Activated CD4-positive, alpha-beta T cell treated with anti-CD3 and anti-CD28 coated beads for 36 hours (primary cell): ENCODE measurements at regions of chr16 and their contacts with region 1.

Region 1: DNA sequence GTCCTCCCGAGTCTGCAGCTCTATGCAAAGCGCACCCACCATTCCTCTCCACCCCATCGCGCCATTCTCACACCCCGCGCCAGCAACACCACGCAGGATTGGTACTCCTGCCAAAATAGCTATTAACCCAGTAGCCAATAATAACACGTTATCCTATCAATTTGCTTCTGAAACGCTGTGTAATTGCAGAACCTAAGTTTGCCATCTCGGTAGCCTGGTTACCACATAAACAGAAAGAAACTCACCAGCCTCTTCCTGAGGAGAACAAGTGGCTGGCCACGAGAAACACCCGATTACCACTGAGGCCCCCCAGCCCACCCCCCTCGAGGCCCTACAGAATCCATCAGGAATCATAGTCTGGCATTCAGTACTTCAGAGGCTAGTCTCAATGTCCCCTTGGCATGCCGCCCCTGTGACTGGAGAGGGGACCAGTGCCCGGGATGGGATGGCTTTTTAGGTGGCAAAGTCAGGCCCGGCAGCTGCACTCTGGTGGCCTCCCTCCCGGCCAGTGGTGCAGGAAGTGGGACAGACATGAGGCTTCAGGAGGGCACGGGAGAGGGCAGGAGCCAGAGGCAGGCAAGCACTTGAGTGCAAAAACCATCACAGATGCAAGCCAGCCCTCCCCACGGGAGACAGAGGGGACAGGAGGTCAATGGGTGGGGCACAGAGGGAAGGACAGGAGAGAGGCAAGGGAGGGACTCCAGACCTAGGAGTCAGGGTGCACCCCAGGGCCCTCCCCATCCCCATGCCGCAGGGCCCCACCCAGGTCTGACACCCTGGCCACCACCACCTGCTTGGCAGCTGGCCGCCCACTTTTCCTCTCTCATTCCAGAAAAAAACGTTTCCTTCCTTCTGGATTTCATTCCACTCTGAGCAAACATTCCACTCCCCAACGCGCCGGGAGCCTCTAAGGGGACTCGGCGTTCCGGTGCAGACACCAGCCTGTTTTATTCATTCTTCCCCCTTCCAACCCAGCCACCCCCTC is 192.5 kb downstream of the ZNF423 start:
- DNase-seq: no peak
- ATAC-seq: no peak
- H3K4me3 Mint-ChIP-seq: no peak overlapping the region
- H3K27ac Mint-ChIP-seq: no peak overlapping the region
- H3K4me1 Mint-ChIP-seq: no peaks in the 10 kb centered on the region
- H3K27me3 Mint-ChIP-seq: no peaks in the 10 kb centered on the region

Region 2: DNA sequence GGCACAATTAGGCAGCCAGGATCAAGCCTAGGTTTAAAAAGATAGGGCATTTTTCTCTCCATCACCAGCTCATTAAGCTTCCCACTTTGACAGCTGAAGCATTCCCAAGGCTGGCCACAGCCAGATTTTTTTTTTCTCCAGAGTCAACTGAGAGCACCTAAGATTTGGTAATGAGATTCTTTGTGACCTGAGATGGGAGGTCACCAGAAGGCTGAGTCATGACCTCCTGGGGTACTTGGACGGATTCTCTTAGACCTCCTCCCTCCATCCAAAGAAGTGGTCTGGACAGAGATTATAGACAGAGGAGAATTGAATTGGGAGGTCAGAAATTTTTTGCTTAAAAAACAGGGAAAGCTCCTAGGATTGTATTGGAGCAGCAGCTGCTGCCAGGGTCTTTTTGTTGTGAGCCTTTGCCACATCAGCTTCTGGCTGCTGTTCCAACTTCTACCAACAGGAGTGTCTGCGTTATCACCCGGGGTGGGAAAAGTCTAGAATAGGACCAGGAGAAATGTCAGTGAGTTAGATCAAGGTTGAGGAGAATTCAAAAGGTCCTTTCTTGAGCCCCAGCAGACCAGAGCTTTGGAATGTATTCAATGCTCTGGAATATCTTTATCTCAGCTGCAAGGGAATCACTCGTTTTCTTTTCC is 832.2 kb before region 1 on chr16:
- CTCF ChIA-PET with region 1: no interaction called
- POLR2A ChIA-PET with region 1: no interaction called
- intact Hi-C with region 1: no loop called
- DNase-seq: no peak
- ATAC-seq: no peak
- H3K4me3 Mint-ChIP-seq: no peak overlapping the region
- H3K27ac Mint-ChIP-seq: no peak overlapping the region
- H3K4me1 Mint-ChIP-seq: no peaks in the 10 kb centered on the region
- H3K27me3 Mint-ChIP-seq: no peaks in the 10 kb centered on the region

Region 3: GRCh38 chr16:49716339-49716934 is 53.1 kb after region 1 on chr16:
- CTCF ChIA-PET with region 1: no interaction called
- POLR2A ChIA-PET with region 1: no interaction called
- intact Hi-C with region 1: no loop called
- DNase-seq: no peak
- ATAC-seq: no peak
- H3K4me3 Mint-ChIP-seq: no peak overlapping the region
- H3K27ac Mint-ChIP-seq: no peak overlapping the region
- H3K4me1 Mint-ChIP-seq: no peaks in the 10 kb centered on the region
- H3K27me3 Mint-ChIP-seq: peaks cover 2% of the 10 kb centered on the region

Region 4: GRCh38 chr16:50627419-50627818 is 964.0 kb after region 1 on chr16:
- CTCF ChIA-PET with region 1: no interaction called
- POLR2A ChIA-PET with region 1: no interaction called
- intact Hi-C with region 1: loop called in 1 of 2 experiments (anchors 5 kb)
- DNase-seq: peak; percentile 72
- ATAC-seq: peak; percentile 86
- H3K4me3 Mint-ChIP-seq: no peak overlapping the region
- H3K27ac Mint-ChIP-seq: peak overlapping the region; percentile 68
- H3K4me1 Mint-ChIP-seq: peaks cover 40% of the 10 kb centered on the region
- H3K27me3 Mint-ChIP-seq: no peaks in the 10 kb centered on the region